IMR-90 (cell line): ENCODE measurements at regions of chr1 and their contacts with region 1.

Region 1: DNA sequence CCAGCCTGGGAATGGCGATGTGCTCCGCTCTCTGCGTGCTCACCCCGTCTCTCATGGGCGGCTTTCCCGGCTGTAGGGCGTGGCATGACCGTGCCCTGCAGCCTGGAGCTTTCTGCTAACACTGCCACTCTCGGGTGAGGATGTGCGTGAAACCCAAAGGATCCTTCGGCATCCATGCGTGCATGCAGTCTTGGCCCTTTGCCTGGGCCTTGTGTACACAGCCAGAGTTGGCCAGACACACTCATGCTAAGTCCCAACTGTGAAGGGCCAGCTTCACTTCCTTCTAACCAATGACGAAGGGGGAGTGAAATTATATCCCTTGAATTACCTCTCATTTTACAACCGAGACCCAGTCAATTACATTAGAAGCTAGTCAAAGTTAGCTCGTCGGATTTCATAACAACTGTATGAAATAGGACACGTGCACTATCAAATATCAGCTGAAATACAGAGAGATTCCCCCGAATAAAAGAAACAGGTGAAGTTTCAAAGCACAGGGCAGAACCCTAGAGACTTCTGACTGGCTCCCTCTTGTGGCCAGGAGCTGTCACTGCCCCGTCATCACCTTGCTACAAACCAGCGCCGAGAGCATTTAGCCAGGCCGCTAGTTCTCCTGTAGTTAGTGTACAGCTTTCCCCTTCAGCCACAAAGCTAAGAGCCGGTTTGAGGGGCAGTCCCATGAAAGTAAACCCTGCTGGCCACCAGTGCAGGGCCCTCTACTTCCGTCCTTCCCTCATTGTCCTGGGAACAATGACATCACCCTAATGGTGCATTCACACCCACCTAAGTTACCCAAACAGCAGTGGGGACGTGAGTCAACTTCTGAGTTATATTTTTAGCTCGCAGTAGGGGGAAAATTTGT is 63.4 kb upstream of the COA6 start:
- DNase-seq: peak; percentile 46
- ATAC-seq: peak; percentile 89
- H3K4me3 ChIP-seq: peak overlapping the region; percentile 17; the same call in 1 of the 2 replicates
- H3K27ac ChIP-seq: no peak overlapping the region
- H3K4me1 ChIP-seq: peaks cover 3% of the 10 kb centered on the region; the same call in 1 of the 2 replicates
- H3K27me3 ChIP-seq: peaks cover 2% of the 10 kb centered on the region; the same call in 1 of the 2 replicates
- CTCF ChIP-seq: peak; percentile 71
- POLR2A ChIP-seq: no peak
- RAD21 ChIP-seq: peak; percentile 55

Region 2: DNA sequence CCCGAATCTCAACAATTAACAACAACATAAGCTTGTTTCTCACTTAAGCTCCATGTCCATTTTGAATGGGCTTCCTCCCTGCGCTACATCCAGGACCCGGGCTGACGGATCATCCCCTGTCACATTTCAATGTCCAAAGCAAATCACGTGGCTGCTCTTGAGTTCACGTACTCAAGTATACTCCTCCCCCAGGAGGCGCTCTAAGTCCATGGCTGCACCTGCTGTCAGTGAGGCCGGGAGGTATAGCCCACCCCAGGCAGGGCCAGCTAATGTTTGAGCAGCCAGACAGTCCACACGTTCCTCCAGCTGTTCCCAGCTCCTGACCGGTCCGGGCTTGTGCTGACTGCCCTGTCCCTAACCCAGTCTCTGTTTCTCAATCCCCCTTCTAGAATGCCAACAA is 184.5 kb before region 1 on chr1:
- CTCF ChIA-PET with region 1: interaction called, 5 read pairs
- POLR2A ChIA-PET with region 1: no interaction called
- dilution Hi-C with region 1: no loop called
- in situ Hi-C with region 1: loop called (anchors 25 kb)
- intact Hi-C with region 1: no loop called
- DNase-seq: peak; percentile 44
- ATAC-seq: peak; percentile 73
- H3K4me3 ChIP-seq: no peak overlapping the region
- H3K27ac ChIP-seq: no peak overlapping the region
- H3K4me1 ChIP-seq: no peaks in the 10 kb centered on the region
- H3K27me3 ChIP-seq: no peaks in the 10 kb centered on the region
- CTCF ChIP-seq: peak; percentile 48
- POLR2A ChIP-seq: no peak
- RAD21 ChIP-seq: peak; percentile 62

Region 3: GRCh38 chr1:234154320-234155251 is 155.2 kb before region 1 on chr1:
- CTCF ChIA-PET with region 1: no interaction called
- POLR2A ChIA-PET with region 1: no interaction called
- dilution Hi-C with region 1: no loop called
- in situ Hi-C with region 1: loop called (anchors 25 kb)
- intact Hi-C with region 1: loop called (anchors 1 kb)
- DNase-seq: peak; percentile 73
- ATAC-seq: peak; percentile 97
- H3K4me3 ChIP-seq: no peak overlapping the region
- H3K27ac ChIP-seq: no peak overlapping the region
- H3K4me1 ChIP-seq: peaks cover 4% of the 10 kb centered on the region; the same call in 1 of the 2 replicates
- H3K27me3 ChIP-seq: no peaks in the 10 kb centered on the region; the same call in 1 of the 2 replicates
- CTCF ChIP-seq: peak; percentile 58
- POLR2A ChIP-seq: no peak
- RAD21 ChIP-seq: peak; percentile 44

Region 4: DNA sequence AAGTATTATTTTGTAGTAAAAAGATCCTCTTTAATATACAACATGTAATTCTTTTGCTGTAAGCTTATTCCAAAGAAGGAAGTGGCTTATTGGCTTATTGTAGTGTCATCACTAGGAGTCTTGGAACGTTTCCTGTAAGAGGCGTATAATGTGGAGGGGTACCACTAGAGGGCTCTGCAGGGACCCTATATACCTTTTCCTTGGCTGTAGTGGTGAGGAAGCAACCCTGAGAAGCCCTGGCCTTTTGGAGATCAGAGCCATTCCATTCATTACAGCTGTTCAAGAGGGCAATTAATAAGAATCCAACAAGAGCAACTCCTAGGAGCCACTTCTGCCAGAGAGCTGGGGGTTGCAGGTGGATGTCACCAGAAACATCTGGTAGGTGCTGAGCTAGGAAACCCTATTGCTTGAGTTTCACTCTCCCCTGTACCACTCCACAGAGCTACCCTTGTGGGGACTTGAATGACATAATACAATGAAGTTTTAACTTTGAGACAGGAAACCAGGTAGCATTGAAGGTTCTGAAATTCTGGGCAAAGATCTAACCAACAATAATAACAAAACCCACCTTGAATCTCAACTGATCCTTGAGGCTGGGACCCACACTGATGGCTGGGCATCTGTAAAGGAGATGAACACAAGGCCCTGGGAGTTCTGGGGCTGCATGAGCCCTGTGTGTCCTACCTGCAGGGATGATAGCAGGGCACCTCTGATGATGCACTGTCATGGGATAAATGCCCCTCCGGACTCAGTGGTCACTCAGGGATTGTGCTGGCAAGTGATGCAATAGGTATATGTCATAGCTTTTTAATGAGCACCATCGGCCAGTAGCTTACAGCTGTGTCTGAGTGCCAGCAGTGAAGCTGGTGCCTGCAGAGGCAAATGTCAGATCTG is 96.8 kb before region 1 on chr1:
- CTCF ChIA-PET with region 1: no interaction called
- POLR2A ChIA-PET with region 1: no interaction called
- dilution Hi-C with region 1: no loop called
- in situ Hi-C with region 1: no loop called
- intact Hi-C with region 1: loop called (anchors 2 kb)
- DNase-seq: peak; percentile 26
- ATAC-seq: no peak
- H3K4me3 ChIP-seq: no peak overlapping the region
- H3K27ac ChIP-seq: no peak overlapping the region
- H3K4me1 ChIP-seq: no peaks in the 10 kb centered on the region
- H3K27me3 ChIP-seq: peaks cover 8% of the 10 kb centered on the region
- CTCF ChIP-seq: peak; percentile 29; the same call in 1 of the 2 replicates
- POLR2A ChIP-seq: no peak
- RAD21 ChIP-seq: no peak

Region 5: GRCh38 chr1:234271243-234271606 is 38.6 kb before region 1 on chr1:
- CTCF ChIA-PET with region 1: no interaction called
- POLR2A ChIA-PET with region 1: no interaction called
- dilution Hi-C with region 1: no loop called
- in situ Hi-C with region 1: no loop called
- intact Hi-C with region 1: no loop called
- DNase-seq: no peak
- ATAC-seq: no peak
- H3K4me3 ChIP-seq: no peak overlapping the region
- H3K27ac ChIP-seq: no peak overlapping the region
- H3K4me1 ChIP-seq: no peaks in the 10 kb centered on the region
- H3K27me3 ChIP-seq: no peaks in the 10 kb centered on the region
- CTCF ChIP-seq: no peak
- POLR2A ChIP-seq: no peak
- RAD21 ChIP-seq: no peak

Region 6: DNA sequence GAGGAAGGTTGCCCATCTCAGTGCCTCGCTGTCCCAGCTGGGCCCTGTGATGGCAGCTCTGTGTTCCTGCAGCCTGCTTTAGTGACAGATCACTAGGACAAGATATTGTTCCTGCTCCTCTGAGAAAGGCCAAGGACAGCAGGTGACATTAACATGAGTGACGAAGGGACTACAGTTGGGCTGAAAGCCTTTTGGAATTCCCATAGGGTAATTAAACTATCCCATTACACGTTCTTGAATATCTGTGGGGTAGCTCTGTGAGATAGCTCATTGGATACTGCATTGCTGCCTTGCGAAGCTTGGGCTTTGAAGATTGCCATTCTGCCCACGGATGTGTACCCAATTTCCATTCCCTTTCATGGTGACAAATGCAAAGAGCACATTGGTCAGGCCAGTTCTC is 14.8 kb before region 1 on chr1:
- CTCF ChIA-PET with region 1: interaction called, 16 read pairs
- POLR2A ChIA-PET with region 1: no interaction called
- dilution Hi-C with region 1: no loop called
- in situ Hi-C with region 1: no loop called
- intact Hi-C with region 1: no loop called
- DNase-seq: no peak
- ATAC-seq: no peak
- H3K4me3 ChIP-seq: no peak overlapping the region
- H3K27ac ChIP-seq: no peak overlapping the region
- H3K4me1 ChIP-seq: no peaks in the 10 kb centered on the region
- H3K27me3 ChIP-seq: no peaks in the 10 kb centered on the region
- CTCF ChIP-seq: no peak
- POLR2A ChIP-seq: no peak
- RAD21 ChIP-seq: no peak

Region 7: DNA sequence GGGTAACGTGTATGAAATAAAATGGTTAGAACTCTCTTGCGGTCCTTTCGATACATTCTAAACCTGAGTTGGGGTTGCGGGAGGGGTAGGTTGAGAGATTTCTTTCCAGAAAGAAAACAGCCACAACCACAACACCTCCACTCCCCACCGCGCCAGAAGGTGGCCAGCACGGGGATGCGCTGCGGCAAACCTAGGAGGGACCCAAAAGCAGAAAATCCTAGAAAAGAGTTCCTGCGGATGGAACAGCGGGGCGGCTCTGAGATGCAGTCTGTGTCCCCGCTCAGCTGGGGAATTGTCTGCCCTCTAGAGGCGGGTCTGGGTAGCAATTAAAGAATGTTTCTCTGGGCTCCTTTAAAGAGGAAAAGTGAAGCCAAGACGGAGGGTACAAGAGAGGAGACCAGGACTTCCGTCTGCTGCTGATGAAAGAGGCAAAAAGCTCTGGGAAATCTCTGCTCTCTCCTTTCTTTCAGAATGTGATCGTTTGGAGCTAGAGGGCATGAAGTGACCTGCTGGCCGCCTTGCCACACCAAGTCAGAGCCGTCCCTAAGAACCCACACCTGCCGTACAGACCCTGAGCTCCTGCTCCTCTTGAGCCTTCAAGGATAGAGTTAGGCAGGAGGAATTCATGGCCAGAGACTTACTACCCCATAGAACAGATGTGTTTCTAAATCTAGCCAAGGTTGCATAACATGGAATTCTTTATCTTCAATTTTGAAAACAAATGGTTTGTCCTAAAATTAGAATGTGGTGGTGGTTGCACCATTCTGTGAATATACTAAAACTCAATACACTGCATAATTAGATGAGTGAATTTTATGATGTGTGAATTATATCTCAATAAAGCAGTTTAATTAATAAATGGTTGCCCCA is 16.9 kb after region 1 on chr1:
- CTCF ChIA-PET with region 1: interaction called, 16 read pairs
- POLR2A ChIA-PET with region 1: no interaction called
- dilution Hi-C with region 1: no loop called
- in situ Hi-C with region 1: no loop called
- intact Hi-C with region 1: no loop called
- DNase-seq: peak; percentile 43
- ATAC-seq: peak; percentile 92
- H3K4me3 ChIP-seq: peak overlapping the region; percentile 40; the same call in 1 of the 2 replicates
- H3K27ac ChIP-seq: no peak overlapping the region
- H3K4me1 ChIP-seq: peaks cover 3% of the 10 kb centered on the region
- H3K27me3 ChIP-seq: peaks cover 4% of the 10 kb centered on the region
- CTCF ChIP-seq: peak; percentile 72
- POLR2A ChIP-seq: no peak
- RAD21 ChIP-seq: peak; percentile 59